HepG2 (cell line): ENCODE measurements at regions of chr1 and their contacts with region 1.

Region 1: DNA sequence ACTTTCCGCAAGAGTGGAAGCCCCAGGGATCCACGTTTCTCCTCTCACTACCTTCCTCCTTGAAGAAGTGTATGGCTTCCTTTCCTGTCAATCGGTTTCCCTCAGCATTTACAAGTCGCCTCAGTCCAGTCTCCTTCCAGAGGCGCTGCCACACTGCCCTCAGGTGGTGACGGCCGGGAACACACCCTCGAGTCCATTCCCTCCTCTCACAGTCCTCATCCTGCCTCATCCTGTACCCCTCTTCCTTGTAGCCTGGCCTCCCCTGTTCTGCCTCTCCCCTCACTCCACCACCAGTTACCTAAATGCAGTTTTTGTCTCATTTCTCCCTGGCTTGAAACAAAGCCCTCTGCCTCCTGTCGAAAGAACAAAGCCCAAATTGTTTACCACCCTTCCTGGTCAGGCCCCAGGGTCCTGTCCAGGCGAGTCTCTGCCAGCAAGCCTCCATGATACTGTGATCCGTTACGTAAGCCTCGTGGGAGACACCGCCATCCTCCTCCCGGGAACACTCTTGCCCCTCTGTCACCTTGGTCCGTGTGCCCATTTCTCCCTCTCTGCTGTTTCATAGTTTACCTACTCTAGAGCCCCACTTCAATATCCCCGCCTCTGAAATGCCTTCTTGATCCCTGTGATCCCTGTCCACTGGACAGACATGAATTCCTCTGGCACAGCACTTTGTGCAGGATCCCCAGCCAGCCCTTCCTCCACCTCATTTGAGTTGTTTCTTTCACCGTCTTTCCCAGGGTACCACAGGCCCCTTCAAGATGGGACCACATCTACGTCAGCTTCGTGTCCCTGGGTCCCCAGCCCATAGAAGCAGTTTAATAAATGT is 23.3 kb upstream of the LSM10 start:
- DNase-seq: peak; percentile 56
- ATAC-seq: peak; percentile 95
- H3K4me3 ChIP-seq: no peak overlapping the region
- H3K27ac ChIP-seq: no peak overlapping the region
- H3K4me1 ChIP-seq: peaks cover 13% of the 10 kb centered on the region
- H3K27me3 ChIP-seq: no peaks in the 10 kb centered on the region
- CTCF ChIP-seq: peak; percentile 97
- EP300 ChIP-seq: no peak
- POLR2A ChIP-seq: no peak
- RAD21 ChIP-seq: peak; percentile 88

Region 2: DNA sequence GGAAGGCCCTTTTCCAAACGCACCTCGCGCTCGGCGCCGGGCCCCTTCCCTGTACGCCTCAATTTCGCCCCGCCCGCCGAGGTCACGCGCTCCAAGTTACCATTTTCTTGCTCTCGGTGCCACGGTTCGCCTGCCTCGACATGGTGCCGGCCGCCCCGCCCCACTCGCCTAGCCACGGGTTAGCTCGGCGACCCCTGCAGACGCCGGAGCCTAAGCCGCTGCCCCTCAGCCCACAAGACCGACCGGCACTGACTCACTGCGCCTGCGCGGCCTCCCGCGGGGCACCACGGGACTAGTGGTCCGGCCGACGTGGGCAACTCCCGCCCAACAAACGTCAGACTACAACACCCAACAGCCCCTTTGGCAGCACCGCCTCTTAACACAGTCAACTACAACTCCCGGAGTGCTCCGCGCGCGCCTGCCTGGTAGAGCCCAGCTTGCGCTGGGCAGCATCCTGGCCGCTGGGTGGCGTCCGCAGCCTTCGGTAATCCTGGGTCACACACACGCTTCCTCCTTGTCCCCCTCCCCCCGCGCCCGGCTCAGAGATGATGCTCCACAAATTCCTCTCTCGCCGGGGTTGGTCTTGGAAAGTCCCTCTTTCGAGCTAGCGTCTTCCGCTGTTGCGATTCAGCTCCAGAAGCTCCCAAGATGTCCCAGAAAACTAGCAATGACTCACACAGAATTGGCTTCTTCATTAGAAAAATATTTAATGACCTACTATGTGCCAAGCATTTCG is 271.6 kb before region 1 on chr1 and contains the start of gene TRAPPC3:
- CTCF ChIA-PET with region 1: no interaction called
- POLR2A ChIA-PET with region 1: no interaction called
- in situ Hi-C with region 1: no loop called
- intact Hi-C with region 1: loop called (anchors 10 kb)
- DNase-seq: peak; percentile 99
- ATAC-seq: peak; percentile 88
- H3K4me3 ChIP-seq: peak within 1 kb of the TSS; percentile 76 to 83 (median 81)
- H3K27ac ChIP-seq: peak within 1 kb of the TSS; percentile 80
- H3K4me1 ChIP-seq: peaks cover 58% of the 10 kb centered on the region
- H3K27me3 ChIP-seq: no peaks in the 10 kb centered on the region
- CTCF ChIP-seq: peak; percentile 98
- EP300 ChIP-seq: no peak
- POLR2A ChIP-seq: peak in 1 of 2 experiments; percentile 72; a peak in 2 of 4 replicates
- RAD21 ChIP-seq: peak; percentile 99
- total RNA-seq, gene TRAPPC3: 62.4 and 66.7 TPM in 2 replicates

Region 3: GRCh38 chr1:36342481-36343478 is 78.3 kb before region 1 on chr1:
- CTCF ChIA-PET with region 1: interaction called, 24 read pairs
- POLR2A ChIA-PET with region 1: no interaction called
- in situ Hi-C with region 1: loop called (anchors 5 kb)
- intact Hi-C with region 1: loop called (anchors 2 kb)
- DNase-seq: no peak
- ATAC-seq: peak; percentile 79
- H3K4me3 ChIP-seq: no peak overlapping the region
- H3K27ac ChIP-seq: no peak overlapping the region
- H3K4me1 ChIP-seq: peaks cover 14% of the 10 kb centered on the region; the same call in 1 of the 2 replicates
- H3K27me3 ChIP-seq: no peaks in the 10 kb centered on the region
- CTCF ChIP-seq: peak; percentile 86
- EP300 ChIP-seq: no peak
- POLR2A ChIP-seq: no peak
- RAD21 ChIP-seq: peak; percentile 81

Region 4: GRCh38 chr1:36369061-36369861 is 51.8 kb before region 1 on chr1:
- CTCF ChIA-PET with region 1: no interaction called
- POLR2A ChIA-PET with region 1: no interaction called
- in situ Hi-C with region 1: no loop called
- intact Hi-C with region 1: loop called (anchors 2 kb)
- DNase-seq: peak; percentile 57
- ATAC-seq: peak; percentile 58
- H3K4me3 ChIP-seq: no peak overlapping the region
- H3K27ac ChIP-seq: no peak overlapping the region
- H3K4me1 ChIP-seq: peaks cover 36% of the 10 kb centered on the region
- H3K27me3 ChIP-seq: no peaks in the 10 kb centered on the region
- CTCF ChIP-seq: peak; percentile 90
- EP300 ChIP-seq: no peak
- POLR2A ChIP-seq: no peak
- RAD21 ChIP-seq: peak; percentile 79

Region 5: GRCh38 chr1:36465694-36466369 is 44.8 kb after region 1 on chr1:
- CTCF ChIA-PET with region 1: no interaction called
- POLR2A ChIA-PET with region 1: no interaction called
- in situ Hi-C with region 1: no loop called
- intact Hi-C with region 1: no loop called
- DNase-seq: no peak
- ATAC-seq: no peak
- H3K4me3 ChIP-seq: no peak overlapping the region
- H3K27ac ChIP-seq: no peak overlapping the region
- H3K4me1 ChIP-seq: peaks cover 52% of the 10 kb centered on the region
- H3K27me3 ChIP-seq: no peaks in the 10 kb centered on the region; a peak in 1 of 5 replicates
- CTCF ChIP-seq: no peak
- EP300 ChIP-seq: no peak
- POLR2A ChIP-seq: no peak
- RAD21 ChIP-seq: no peak